ENCODE measurements at regions of chrX and their contacts with region 1.

Region 1: DNA sequence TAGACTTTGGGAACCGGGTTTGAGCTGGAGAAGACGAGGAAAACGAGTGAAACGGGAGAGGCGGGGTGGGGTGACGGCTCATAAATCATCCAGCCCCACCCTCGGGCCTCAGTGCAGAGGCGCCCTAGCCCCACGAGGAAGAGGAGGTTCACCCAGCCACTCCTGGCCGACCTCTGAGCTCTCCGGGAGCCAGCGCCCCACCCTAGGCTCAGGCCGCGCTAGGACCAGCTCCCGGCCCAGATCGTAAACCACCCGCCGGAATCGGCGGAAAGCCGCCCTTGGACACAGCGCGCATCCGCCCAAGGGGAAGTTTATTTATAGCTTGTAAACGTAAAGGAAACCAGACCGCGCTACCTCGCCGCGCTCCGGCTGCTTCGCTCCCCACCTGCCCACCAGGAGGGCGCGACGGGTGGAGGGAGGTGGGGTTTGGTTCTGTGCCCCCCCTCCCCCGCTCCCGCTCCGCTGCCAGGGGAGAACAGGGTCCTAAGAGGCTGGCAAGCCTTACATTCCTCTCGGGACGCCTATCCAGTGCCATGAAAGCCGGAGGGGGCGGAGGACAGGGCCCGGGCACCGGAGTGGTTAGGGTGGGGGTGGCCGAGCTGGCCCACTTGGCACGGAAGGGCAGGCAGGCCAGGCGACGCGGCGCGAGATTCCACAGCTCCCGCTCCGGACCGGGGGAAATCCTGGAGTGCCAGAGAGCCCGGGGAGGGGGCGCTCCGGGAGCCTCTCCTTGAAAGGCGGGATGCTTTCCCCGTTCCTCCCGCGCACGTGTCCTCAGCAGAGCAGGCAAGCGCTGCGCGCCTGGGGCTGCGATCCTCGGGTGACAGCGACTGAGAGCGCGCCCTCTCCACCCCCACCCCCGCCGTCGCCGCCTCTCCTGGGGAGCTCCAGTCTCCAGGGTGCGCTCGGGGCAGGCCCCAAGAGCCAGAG is 84.2 kb downstream of the BCOR start:
- DNase-seq: peak in 8 of 10 donors; percentile 18 to 71 (median 55)
- H3K4me3 ChIP-seq: peak overlapping the region; percentile 23 to 71 (median 56)
- H3K27ac ChIP-seq: peak overlapping the region in 56 of 59 donors; percentile 41 to 89 (median 81)
- H3K27me3 ChIP-seq: peaks cover 0 to 88% (median 37%) of the 10 kb centered on the region in 45 donors
- CTCF ChIP-seq: peak in 1 of 56 donors; percentile 14

Region 2: GRCh38 chrX:39445336-39445735 is 568.2 kb before region 1 on chrX:
- intact Hi-C with region 1: no loop called
- DNase-seq: no peak
- H3K4me3 ChIP-seq: no peak overlapping the region
- H3K27ac ChIP-seq: no peak overlapping the region
- H3K27me3 ChIP-seq: peaks cover 0 to 54% (median 9%) of the 10 kb centered on the region in 45 donors
- CTCF ChIP-seq: peak in 33 of 56 donors; percentile 9 to 36 (median 22)

Region 3: GRCh38 chrX:40062525-40063155 is 49.1 kb after region 1 on chrX:
- intact Hi-C with region 1: loop called in 1 of 2 experiments (anchors 5 kb)
- DNase-seq: peak in 7 of 10 donors; percentile 49 to 70 (median 64)
- H3K4me3 ChIP-seq: no peak overlapping the region
- H3K27ac ChIP-seq: peak overlapping the region in 10 of 59 donors; percentile 14 to 51 (median 38)
- H3K27me3 ChIP-seq: peaks cover 0 to 85% (median 8%) of the 10 kb centered on the region in 45 donors
- CTCF ChIP-seq: no peak

Region 4: DNA sequence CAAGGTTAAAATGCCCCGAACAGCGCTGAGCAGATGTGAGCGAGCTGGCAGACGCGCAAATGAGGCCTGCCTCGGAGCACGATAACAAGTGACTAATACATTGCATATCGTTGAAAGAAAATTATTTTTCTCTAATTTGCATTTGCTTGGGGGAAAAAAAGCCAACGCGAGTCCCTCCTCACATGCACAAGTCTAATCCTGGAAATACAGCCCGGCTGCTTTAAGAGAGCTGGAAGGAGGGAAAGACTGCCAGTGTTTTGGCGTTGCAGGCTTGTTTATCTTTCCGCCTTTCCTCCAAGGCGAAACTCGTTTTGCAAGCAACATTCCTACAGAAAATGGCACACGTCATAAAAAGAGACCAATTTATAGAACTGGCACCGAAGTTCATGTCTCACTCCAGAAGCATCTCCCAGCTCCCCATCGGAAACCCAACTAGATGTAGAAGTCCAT is 71.6 kb after region 1 on chrX:
- intact Hi-C with region 1: loop called (anchors 2 to 5 kb)
- DNase-seq: no peak
- H3K4me3 ChIP-seq: peak overlapping the region in 13 of 59 donors; percentile 0 to 51 (median 10)
- H3K27ac ChIP-seq: peak overlapping the region in 3 of 59 donors; percentile 81 to 82 (median 81)
- H3K27me3 ChIP-seq: peaks cover 0 to 99% (median 56%) of the 10 kb centered on the region in 45 donors
- CTCF ChIP-seq: no peak

Measured in dorsolateral prefrontal cortex (tissue), 120 donors.